Testis (tissue), 5 donors: ENCODE measurements at regions of chr18 and their contacts with region 1.

Region 1: DNA sequence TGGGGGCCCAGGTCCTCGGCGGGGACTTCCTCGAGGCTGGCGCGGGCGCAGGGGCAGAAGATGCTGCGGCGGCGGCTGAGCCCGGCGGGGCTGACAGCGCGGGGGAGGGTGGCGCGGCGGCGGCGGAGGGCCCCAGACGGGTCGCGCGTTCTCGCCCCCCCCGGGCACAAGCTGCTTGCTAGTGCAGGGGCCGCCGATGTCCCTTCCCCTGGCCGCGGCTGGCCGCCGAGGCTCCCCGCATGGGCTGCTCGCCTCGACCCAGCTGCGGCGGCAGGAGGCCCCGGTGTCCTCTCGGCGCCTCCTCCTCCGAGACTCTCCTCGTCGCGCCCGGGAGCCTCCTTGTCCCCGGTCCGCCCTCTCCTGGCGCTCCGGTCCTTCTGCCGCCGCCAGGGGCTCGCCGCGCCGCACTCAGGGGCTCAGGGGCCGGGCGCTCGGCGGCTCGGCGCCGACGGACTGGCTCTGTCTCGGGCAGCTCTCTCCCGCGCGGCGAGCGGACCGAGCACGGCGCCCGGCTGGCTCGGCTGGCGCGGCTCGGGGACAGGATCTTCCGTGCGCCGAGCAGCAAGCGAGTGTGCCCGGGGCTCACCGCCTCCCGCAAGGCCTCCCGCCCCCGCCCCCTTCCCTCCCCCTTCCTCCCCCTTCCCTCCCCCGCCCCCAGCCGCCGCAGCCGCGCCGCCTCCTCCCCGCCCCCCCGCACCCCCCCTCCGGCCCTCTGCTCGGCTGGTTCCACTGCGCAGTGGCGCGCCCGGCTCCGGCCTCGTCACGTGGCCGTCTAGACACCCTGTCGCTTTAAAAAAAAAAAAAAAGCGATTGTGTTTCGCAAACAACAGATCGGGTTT is 902 bp upstream of the SMAD7 start:
- DNase-seq: peak; percentile 86
- H3K4me3 ChIP-seq: peak overlapping the region; percentile 69 to 76
- H3K27ac ChIP-seq: peak overlapping the region; percentile 89 to 98
- H3K4me1 ChIP-seq: peaks cover 16% of the 10 kb centered on the region
- H3K27me3 ChIP-seq: no peaks in the 10 kb centered on the region
- CTCF ChIP-seq: no peak
- POLR2A ChIP-seq: no peak

Region 2: DNA sequence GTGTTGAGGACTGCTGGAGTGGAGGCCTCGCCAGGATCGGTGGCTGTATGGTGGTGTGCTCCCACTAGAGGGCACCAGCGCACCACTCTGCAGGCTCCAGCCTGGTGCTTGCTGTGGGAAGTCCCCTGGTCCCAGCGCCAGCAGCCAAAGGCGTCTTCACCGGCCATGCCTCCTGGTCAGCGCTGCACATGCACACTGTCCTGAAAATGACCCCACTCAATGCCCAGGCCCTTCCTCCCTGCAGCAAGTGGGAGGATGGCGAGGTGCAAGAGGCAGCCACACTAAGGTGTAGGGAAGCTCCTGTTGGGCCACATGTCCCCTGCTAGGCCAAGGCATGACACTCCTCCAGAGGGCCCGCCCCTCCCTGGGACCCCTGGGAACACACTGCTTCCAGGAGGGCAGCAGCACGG is 276.3 kb before region 1 on chr18:
- intact Hi-C with region 1: loop called (anchors 5 kb)
- DNase-seq: peak; percentile 91
- H3K4me3 ChIP-seq: no peak overlapping the region
- H3K27ac ChIP-seq: no peak overlapping the region
- H3K4me1 ChIP-seq: peaks cover 13% of the 10 kb centered on the region
- H3K27me3 ChIP-seq: no peaks in the 10 kb centered on the region
- CTCF ChIP-seq: peak; percentile 86 to 89 (median 88)
- POLR2A ChIP-seq: no peak

Region 3: DNA sequence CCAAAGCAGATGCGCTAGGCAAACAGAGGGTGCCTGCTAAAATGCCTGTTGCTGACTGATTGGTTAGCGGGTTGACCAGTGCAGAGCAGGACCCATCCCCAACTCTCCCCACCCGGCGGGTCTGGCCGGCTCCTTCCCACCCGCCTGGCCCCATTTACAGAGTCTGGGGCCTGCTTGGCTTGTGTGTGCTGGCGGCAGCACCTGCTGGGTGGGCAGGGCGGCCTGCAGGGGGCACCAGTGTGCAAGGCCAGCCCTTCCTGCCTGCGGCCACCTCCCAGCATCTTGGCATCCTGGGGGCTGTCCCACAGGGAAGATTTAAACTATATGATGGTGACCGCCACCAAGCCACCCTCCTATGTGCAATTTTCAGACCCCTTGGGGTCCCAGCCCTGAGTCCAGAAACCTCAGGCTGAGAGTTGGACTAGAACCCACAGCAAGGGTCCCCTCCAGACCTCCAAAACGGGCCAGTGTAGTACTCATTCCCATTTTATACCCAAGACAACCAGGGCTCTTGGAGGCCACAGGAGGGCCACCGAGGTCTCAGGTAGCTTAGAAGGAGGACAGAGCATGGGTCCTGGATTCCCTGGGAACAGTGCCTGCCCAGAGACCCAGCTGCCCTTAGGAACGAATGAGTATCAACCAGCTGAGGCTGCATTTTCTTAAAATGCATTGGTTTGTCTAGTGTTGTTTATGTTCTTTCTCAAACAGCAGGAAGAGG is 174.5 kb before region 1 on chr18:
- intact Hi-C with region 1: loop called (anchors 10 kb)
- DNase-seq: peak; percentile 55
- H3K4me3 ChIP-seq: no peak overlapping the region
- H3K27ac ChIP-seq: no peak overlapping the region
- H3K4me1 ChIP-seq: peaks cover 47% of the 10 kb centered on the region
- H3K27me3 ChIP-seq: no peaks in the 10 kb centered on the region
- CTCF ChIP-seq: peak; percentile 49 to 82 (median 64)
- POLR2A ChIP-seq: no peak

Region 4: DNA sequence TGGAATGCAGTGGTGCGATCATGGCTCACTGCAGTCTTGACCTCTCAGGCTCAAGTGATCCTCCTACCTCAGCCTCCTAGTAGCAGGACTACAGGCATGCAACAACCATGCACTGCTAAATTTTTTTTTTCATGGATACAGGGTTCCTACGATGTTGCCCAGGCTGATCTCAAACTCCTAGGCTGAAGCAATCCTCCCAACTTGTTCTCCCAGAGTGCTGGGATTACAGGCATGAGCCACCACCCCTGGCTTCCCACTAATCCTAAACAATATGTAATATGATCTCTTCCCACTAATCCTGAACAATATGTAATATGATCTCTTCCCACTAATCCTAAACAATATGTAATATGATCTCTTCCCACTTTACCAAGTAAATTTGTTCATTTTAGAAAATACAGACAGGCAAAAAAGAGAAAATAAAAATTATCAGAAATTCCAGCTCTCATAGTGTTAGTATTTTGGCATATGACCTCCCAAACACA is 569.0 kb after region 1 on chr18:
- intact Hi-C with region 1: no loop called
- DNase-seq: no peak
- H3K4me3 ChIP-seq: no peak overlapping the region
- H3K27ac ChIP-seq: no peak overlapping the region
- H3K4me1 ChIP-seq: no peaks in the 10 kb centered on the region
- H3K27me3 ChIP-seq: no peaks in the 10 kb centered on the region
- CTCF ChIP-seq: no peak
- POLR2A ChIP-seq: no peak

Region 5: DNA sequence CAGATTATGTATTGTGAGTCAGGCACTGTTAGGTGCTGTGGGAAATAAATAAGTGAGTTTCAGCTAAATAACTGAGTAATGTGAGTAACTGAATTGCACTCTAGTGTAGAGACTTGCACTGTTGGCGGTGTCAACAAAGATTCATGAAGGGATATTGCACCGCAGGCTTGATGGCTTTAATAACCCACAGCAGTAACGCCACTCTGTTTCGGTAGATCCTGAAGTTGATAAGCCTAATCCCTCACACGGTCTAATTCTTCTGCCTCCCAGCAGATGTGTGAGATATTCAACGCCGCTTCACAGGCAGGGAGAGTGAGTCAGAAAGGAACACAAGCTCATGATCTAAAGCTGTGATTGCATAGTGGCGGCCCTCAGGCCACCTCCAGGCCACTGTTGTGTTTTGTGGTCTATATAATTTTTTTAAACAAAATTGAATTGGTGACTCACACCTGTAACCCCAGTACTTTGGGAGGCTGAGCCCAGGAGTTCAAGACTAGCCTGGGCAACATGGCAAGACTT is 704.5 kb after region 1 on chr18:
- intact Hi-C with region 1: no loop called
- DNase-seq: no peak
- H3K4me3 ChIP-seq: no peak overlapping the region
- H3K27ac ChIP-seq: no peak overlapping the region
- H3K4me1 ChIP-seq: peaks cover 8% of the 10 kb centered on the region
- H3K27me3 ChIP-seq: no peaks in the 10 kb centered on the region
- CTCF ChIP-seq: no peak
- POLR2A ChIP-seq: no peak